Activated naive CD4-positive, alpha-beta T cell treated with anti-CD3 and anti-CD28 coated beads for 36 hours (primary cell): ENCODE measurements at regions of chr5 and their contacts with region 1.

Region 1: GRCh38 chr5:160418561-160419457 is at the start of gene SLU7:
- DNase-seq: peak; percentile 96
- H3K4me3 Mint-ChIP-seq: peak within 1 kb of the TSS; percentile 97
- H3K27ac Mint-ChIP-seq: peak within 1 kb of the TSS; percentile 94
- H3K4me1 Mint-ChIP-seq: peaks cover 43% of the 10 kb centered on the region
- H3K27me3 Mint-ChIP-seq: no peaks in the 10 kb centered on the region
- total RNA-seq, gene SLU7: 33.2 to 34.3 TPM

Region 2: GRCh38 chr5:160008877-160009590 is 409.8 kb before region 1 on chr5 and contains the start of gene TTC1:
- CTCF ChIA-PET with region 1: no interaction called
- intact Hi-C with region 1: loop called (anchors 1 kb)
- DNase-seq: peak; percentile 98
- H3K4me3 Mint-ChIP-seq: peak within 1 kb of the TSS; percentile 98
- H3K27ac Mint-ChIP-seq: peak within 1 kb of the TSS; percentile 94
- H3K4me1 Mint-ChIP-seq: peaks cover 27% of the 10 kb centered on the region
- H3K27me3 Mint-ChIP-seq: no peaks in the 10 kb centered on the region
- total RNA-seq, gene TTC1: 46.0 to 47.1 TPM

Region 3: GRCh38 chr5:160369990-160370712 is 48.7 kb before region 1 on chr5 and contains the start of gene C1QTNF2:
- CTCF ChIA-PET with region 1: no interaction called
- intact Hi-C with region 1: no loop called
- DNase-seq: peak; percentile 23
- H3K4me3 Mint-ChIP-seq: peak within 1 kb of the TSS; percentile 50
- H3K27ac Mint-ChIP-seq: no peak within 1 kb of the TSS
- H3K4me1 Mint-ChIP-seq: peaks cover 16% of the 10 kb centered on the region
- H3K27me3 Mint-ChIP-seq: peaks cover 64% of the 10 kb centered on the region
- total RNA-seq, gene C1QTNF2: not detected

Region 4: GRCh38 chr5:160399402-160400353 is 19.1 kb before region 1 on chr5 and contains the start of gene FAM200C:
- CTCF ChIA-PET with region 1: interaction called, 3 read pairs
- intact Hi-C with region 1: loop called (anchors 1 kb)
- DNase-seq: peak; percentile 84
- H3K4me3 Mint-ChIP-seq: peak within 1 kb of the TSS; percentile 79
- H3K27ac Mint-ChIP-seq: peak within 1 kb of the TSS; percentile 21
- H3K4me1 Mint-ChIP-seq: peaks cover 12% of the 10 kb centered on the region
- H3K27me3 Mint-ChIP-seq: no peaks in the 10 kb centered on the region
- total RNA-seq, gene FAM200C: 0.84 to 0.93 TPM

Region 5: DNA sequence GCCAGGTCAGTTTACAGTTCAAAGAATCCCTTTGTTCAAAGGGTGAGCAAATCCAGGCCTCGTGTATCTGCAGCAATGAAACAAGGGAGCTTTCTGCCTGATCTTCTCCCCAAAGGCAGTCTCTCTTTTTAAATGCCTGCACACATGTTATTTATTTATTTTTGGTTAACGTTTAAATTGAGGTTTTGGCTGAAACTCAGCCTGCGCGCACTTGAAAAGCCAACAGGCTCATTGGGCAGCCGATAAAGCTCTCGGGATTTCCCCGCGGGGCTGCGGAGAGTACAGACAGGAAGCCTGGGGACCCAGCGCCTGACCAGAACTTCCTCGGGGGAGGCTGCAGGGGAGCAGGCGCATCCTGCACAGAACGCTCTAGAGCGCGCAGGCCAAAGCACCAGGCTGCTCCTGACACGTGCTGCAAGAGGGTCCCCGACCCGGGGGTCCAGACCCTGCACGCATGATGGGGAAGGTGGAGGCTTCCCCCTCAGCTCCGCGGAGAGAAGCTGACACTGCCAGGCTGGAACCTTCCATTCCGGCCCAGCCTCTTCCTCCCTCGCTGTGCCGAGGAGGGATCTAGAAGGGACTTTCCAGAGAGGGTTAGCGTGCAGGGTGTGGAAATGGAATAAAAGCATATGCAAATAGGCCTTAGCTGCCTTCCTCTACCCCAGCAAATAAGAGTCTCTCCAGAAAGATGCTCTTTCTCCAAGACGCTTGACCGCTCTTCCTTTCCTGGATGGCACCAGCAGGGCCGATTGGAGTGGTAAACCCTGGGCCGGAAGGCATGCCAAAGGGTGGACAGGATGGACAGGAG is 49.0 kb after region 1 on chr5:
- CTCF ChIA-PET with region 1: no interaction called
- intact Hi-C with region 1: loop called (anchors 1 kb)
- DNase-seq: peak; percentile 87
- H3K4me3 Mint-ChIP-seq: peak overlapping the region; percentile 99
- H3K27ac Mint-ChIP-seq: peak overlapping the region; percentile 98
- H3K4me1 Mint-ChIP-seq: peaks cover 72% of the 10 kb centered on the region
- H3K27me3 Mint-ChIP-seq: no peaks in the 10 kb centered on the region